ENCODE measurements at regions of chr3 and their contacts with region 1.

Region 1: DNA sequence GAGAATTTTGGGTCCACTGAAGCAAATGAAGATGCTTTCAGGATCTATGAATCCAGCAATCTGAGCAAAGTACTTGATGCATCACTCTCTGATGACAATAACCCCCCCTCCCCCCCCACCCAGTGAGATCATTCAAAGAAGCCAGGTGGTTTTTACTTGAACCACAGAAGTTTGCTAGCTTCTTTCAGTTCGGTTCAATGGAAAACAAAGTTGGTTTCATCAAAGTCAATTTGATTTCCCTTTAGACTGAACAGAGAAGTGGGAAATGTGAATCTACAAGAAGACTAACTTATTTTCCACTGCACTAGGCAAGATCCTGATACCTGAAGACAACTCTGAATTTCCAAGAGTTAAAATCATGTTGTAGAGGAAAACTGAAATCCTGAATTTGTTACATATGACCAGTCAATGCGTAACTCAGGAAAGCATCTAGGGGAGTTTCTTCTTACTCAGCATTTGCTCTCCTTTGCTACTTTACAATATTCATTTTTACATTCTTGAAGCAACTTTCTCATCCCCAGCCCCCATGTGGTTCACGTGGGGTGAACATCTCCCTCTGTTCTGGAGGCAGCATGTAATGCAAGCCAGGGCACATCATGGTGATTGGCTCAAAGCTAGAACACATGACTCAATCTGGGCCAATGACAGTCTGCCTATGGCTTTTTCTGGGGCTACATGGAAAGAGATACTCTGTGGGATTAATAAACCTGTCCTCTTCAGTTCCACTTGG is 572.6 kb downstream of the FOXP1 start:
- DNase-seq: peak; percentile 87
- H3K4me3 Mint-ChIP-seq: peak overlapping the region; percentile 56
- H3K27ac Mint-ChIP-seq: peak overlapping the region; percentile 92
- H3K4me1 Mint-ChIP-seq: peaks cover 68% of the 10 kb centered on the region
- H3K27me3 Mint-ChIP-seq: no peaks in the 10 kb centered on the region

Region 2: GRCh38 chr3:70963431-70964275 is 47.2 kb before region 1 on chr3:
- CTCF ChIA-PET with region 1: no interaction called
- POLR2A ChIA-PET with region 1: no interaction called
- intact Hi-C with region 1: no loop called
- DNase-seq: no peak
- H3K4me3 Mint-ChIP-seq: no peak overlapping the region
- H3K27ac Mint-ChIP-seq: peak overlapping the region; percentile 18
- H3K4me1 Mint-ChIP-seq: peaks cover 4% of the 10 kb centered on the region
- H3K27me3 Mint-ChIP-seq: no peaks in the 10 kb centered on the region

Region 3: GRCh38 chr3:70990723-70991122 is 20.2 kb before region 1 on chr3:
- CTCF ChIA-PET with region 1: interaction called, 4 read pairs
- POLR2A ChIA-PET with region 1: no interaction called
- intact Hi-C with region 1: loop called (anchors 2 kb)
- DNase-seq: no peak
- H3K4me3 Mint-ChIP-seq: no peak overlapping the region
- H3K27ac Mint-ChIP-seq: peak overlapping the region; percentile 81
- H3K4me1 Mint-ChIP-seq: peaks cover 57% of the 10 kb centered on the region
- H3K27me3 Mint-ChIP-seq: no peaks in the 10 kb centered on the region

Region 4: GRCh38 chr3:71050538-71051258 is 39.8 kb after region 1 on chr3:
- CTCF ChIA-PET with region 1: interaction called, 4 read pairs
- POLR2A ChIA-PET with region 1: interaction called, 5 read pairs
- intact Hi-C with region 1: loop called (anchors 1 kb)
- DNase-seq: peak; percentile 61
- H3K4me3 Mint-ChIP-seq: peak overlapping the region; percentile 6
- H3K27ac Mint-ChIP-seq: peak overlapping the region; percentile 86
- H3K4me1 Mint-ChIP-seq: peaks cover 100% of the 10 kb centered on the region
- H3K27me3 Mint-ChIP-seq: no peaks in the 10 kb centered on the region

Region 5: GRCh38 chr3:71380096-71380495 is 369.2 kb after region 1 on chr3:
- CTCF ChIA-PET with region 1: interaction called, 3 read pairs
- POLR2A ChIA-PET with region 1: no interaction called
- intact Hi-C with region 1: loop called (anchors 5 kb)
- DNase-seq: no peak
- H3K4me3 Mint-ChIP-seq: no peak overlapping the region
- H3K27ac Mint-ChIP-seq: peak overlapping the region; percentile 85
- H3K4me1 Mint-ChIP-seq: peaks cover 82% of the 10 kb centered on the region
- H3K27me3 Mint-ChIP-seq: no peaks in the 10 kb centered on the region